ENCODE measurements at regions of chr17 and their contacts with region 1.

Region 1: DNA sequence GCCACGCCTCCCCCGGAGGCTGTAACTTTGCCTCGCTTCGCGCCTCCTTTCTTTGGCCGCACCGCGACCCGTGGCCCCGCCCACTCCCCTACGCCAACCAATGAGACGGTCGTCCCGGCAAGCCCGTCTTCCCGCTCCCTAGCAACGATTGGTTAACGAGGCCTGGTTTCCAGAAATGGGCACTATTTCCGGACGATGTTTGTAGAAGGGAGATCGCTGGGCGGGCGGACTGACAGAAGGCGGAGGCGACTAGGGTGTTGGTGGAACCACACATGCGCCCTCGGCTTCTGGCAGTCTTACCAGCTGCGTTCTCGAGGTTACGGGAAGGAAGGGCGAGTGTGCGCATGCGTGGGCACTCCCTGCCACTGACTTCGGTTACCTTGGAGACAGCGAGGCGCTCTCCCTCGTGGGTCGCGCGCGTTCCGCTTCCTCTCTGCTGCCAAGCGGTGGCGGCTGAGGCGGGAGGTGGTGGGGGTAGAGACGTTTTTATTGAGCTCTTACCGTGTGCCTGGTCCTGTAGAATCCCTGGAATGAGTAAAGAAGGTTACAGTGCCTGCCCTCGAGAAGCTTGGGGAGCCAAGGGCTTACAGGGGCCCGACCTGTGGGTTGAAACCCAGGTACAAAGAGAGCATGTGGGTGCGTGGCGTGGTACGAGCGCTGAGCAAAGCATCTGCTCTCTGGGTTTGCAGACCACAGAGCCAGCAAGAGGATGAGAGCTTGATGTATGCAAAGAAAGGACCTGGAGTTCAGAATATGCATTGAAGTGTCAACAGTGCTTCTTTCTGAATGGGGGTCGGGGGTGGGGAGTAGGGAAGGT is 500 bp upstream of the MAP3K14 start:
- DNase-seq: peak; percentile 97 to 100 (median 100)
- ATAC-seq: peak; percentile 92
- H3K4me3 ChIP-seq: peak overlapping the region; percentile 80
- H3K4me3 Mint-ChIP-seq: peak overlapping the region; percentile 81 to 97 (median 92)
- H3K27ac ChIP-seq: peak overlapping the region; percentile 93
- H3K27ac Mint-ChIP-seq: peak overlapping the region; percentile 90 to 98 (median 95)
- H3K4me1 ChIP-seq: peaks cover 47 to 57% of the 10 kb centered on the region in 2 donors
- H3K4me1 Mint-ChIP-seq: peaks cover 60 to 88% (median 82%) of the 10 kb centered on the region in 7 donors
- H3K27me3 ChIP-seq: no peaks in the 10 kb centered on the region
- H3K27me3 Mint-ChIP-seq: peaks cover 0 to 4% (median 0%) of the 10 kb centered on the region in 5 donors

Region 2: DNA sequence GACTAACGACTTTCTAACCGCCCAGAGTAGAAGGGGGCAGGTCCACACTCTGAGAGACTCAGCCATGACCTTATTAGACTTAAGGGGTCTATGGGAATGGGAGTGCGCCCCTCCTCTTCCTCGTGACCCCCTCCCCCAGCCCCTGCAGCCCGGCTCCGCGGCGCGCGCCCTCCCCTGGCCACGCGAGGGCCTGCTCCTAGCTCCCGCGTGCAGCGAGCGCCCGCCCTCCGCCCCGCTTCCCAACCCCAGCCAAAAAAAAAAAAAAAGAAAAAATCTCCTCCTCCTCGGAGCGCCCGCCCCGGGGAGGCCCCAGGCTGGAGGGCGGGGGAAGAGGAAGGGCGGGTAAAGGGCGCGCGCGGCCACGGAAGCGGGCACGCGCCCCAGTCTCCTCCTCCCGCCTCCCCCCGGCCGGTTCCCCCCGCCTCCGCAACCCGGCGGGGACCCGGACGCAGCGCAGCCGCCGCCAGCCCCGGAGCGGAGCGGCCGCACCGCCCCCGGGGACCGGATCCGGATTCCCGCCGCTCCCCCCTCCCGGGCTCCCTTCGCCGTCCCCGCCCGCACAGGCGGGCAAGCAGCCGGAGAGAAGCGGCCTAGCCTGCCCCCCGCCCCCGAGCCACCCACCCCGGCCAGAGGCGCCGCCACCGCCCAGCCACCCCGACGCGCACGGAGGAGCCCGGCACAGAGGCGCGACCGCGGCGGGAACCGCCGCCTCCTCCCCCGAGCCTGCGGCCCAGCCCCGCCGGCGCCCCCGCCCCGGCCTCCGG is 1098.8 kb before region 1 on chr17:
- CTCF ChIA-PET with region 1: no interaction called
- POLR2A ChIA-PET with region 1: no interaction called
- intact Hi-C with region 1: loop called in 1 of 2 experiments (anchors 10 kb)
- DNase-seq: peak; percentile 82 to 93 (median 92)
- ATAC-seq: peak; percentile 80
- H3K4me3 ChIP-seq: peak overlapping the region; percentile 68
- H3K4me3 Mint-ChIP-seq: peak overlapping the region; percentile 76 to 94 (median 86)
- H3K27ac ChIP-seq: peak overlapping the region; percentile 90
- H3K27ac Mint-ChIP-seq: peak overlapping the region; percentile 84 to 99 (median 97)
- H3K4me1 ChIP-seq: peaks cover 38 to 42% of the 10 kb centered on the region in 2 donors
- H3K4me1 Mint-ChIP-seq: peaks cover 48 to 53% (median 52%) of the 10 kb centered on the region in 7 donors
- H3K27me3 ChIP-seq: no peaks in the 10 kb centered on the region
- H3K27me3 Mint-ChIP-seq: no peaks in the 10 kb centered on the region

Region 3: DNA sequence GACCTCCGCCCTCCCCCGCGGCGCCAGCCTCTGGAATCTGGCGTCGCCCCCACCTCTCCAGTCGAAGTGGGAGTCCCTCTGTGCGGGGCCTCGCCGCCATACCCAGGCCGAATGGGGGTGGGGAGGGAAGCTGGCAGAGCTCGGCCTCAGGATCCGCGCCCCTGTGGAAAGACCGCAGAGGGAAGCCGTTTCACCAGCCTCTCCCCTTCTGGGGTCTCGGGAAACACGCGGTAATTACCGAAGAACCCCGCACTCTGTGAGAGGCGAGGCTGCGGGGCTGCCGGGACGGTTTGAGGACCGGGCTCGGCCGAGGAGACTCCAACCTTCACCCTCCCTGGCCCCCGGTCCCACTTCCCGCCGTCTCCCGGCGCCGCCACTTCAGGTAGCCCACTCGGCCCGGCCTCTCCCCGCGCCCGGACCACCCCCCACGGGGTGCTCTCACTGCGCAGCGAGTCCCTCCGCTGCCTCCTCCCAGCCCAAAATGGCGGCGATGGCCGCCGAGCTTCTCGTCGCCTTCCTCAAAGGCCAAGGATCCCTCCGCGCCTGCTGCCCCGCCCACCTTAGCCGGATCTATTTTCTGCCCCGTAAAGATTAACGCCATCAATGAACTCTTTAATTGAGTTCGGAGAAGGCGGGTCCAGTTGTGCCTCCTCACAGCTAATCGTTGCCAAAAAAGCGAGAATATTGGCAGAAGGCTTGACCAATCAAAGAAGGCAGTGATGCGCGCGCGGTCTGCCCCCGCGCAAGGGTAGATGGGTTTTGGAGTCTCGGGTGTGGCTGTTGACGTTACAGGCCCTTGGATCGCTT is 156.1 kb before region 1 on chr17:
- CTCF ChIA-PET with region 1: no interaction called
- POLR2A ChIA-PET with region 1: interaction called, 3 read pairs
- intact Hi-C with region 1: loop called (anchors 1 to 2 kb)
- DNase-seq: peak; percentile 89 to 100 (median 99)
- ATAC-seq: peak; percentile 93
- H3K4me3 ChIP-seq: peak overlapping the region; percentile 95
- H3K4me3 Mint-ChIP-seq: peak overlapping the region; percentile 88 to 100 (median 96)
- H3K27ac ChIP-seq: peak overlapping the region; percentile 98
- H3K27ac Mint-ChIP-seq: peak overlapping the region; percentile 97 to 100 (median 98)
- H3K4me1 ChIP-seq: peaks cover 15 to 27% of the 10 kb centered on the region in 2 donors
- H3K4me1 Mint-ChIP-seq: peaks cover 29 to 48% (median 43%) of the 10 kb centered on the region in 7 donors
- H3K27me3 ChIP-seq: no peaks in the 10 kb centered on the region
- H3K27me3 Mint-ChIP-seq: no peaks in the 10 kb centered on the region

Region 4: DNA sequence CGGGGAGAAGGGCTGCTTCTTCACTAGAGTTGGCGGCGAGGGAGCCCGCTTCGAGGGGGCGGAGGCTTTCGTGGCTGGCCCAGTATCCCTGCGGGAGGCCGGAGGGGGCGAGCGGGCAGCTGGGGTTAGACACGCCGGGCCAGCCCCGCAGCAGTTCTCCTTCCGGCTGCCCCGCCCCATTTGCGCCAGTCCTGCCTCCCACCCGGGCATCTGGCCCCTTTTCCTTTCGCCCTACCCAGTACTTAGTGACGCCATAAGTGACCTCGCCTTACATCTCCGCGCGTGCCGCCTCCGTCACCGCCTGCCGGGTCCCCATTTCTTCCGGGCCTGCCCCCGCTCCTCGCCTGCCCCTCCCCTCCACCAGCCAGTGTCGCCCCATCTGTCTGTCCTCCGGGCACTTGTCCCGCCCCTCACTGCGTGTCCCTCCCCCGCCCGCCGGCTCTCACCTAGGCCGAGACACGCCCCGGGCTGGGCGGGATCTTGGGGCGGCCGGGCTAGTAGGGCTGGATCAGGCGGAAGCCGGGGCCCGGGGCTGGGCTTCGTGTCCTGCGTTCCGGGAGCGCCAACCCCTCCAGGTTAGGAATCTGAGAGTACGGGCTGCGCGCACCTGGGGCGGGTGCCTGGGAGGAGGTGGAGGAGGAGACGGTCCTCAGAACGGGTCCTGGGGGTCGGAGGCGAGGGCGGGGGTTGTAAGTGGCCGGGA is 69.7 kb before region 1 on chr17:
- CTCF ChIA-PET with region 1: interaction called, 12 read pairs
- POLR2A ChIA-PET with region 1: interaction called, 44 read pairs
- intact Hi-C with region 1: loop called (anchors 1 kb)
- DNase-seq: peak; percentile 83 to 96 (median 87)
- ATAC-seq: peak; percentile 88
- H3K4me3 ChIP-seq: peak overlapping the region; percentile 89
- H3K4me3 Mint-ChIP-seq: peak overlapping the region; percentile 88 to 93 (median 90)
- H3K27ac ChIP-seq: peak overlapping the region; percentile 95
- H3K27ac Mint-ChIP-seq: peak overlapping the region; percentile 89 to 98 (median 96)
- H3K4me1 ChIP-seq: peaks cover 26 to 42% of the 10 kb centered on the region in 2 donors
- H3K4me1 Mint-ChIP-seq: peaks cover 30 to 68% (median 61%) of the 10 kb centered on the region in 7 donors
- H3K27me3 ChIP-seq: no peaks in the 10 kb centered on the region
- H3K27me3 Mint-ChIP-seq: no peaks in the 10 kb centered on the region

Region 5: GRCh38 chr17:45371414-45372327 is 54.4 kb after region 1 on chr17:
- CTCF ChIA-PET with region 1: interaction called, 3 read pairs
- POLR2A ChIA-PET with region 1: interaction called, 6 read pairs
- intact Hi-C with region 1: loop called in 1 of 2 experiments (anchors 1 kb)
- DNase-seq: peak in 1 of 9 donors; percentile 67
- ATAC-seq: peak; percentile 69
- H3K4me3 ChIP-seq: no peak overlapping the region
- H3K4me3 Mint-ChIP-seq: peak overlapping the region; percentile 33 to 88 (median 76)
- H3K27ac ChIP-seq: no peak overlapping the region
- H3K27ac Mint-ChIP-seq: peak overlapping the region in 1 of 9 donors; percentile 2
- H3K4me1 ChIP-seq: no peaks in the 10 kb centered on the region
- H3K4me1 Mint-ChIP-seq: peaks cover 12 to 18% (median 16%) of the 10 kb centered on the region in 7 donors
- H3K27me3 ChIP-seq: no peaks in the 10 kb centered on the region
- H3K27me3 Mint-ChIP-seq: peaks cover 11 to 31% (median 19%) of the 10 kb centered on the region in 5 donors

Region 6: GRCh38 chr17:45782889-45783592 is 465.7 kb after region 1 on chr17:
- CTCF ChIA-PET with region 1: no interaction called
- POLR2A ChIA-PET with region 1: no interaction called
- intact Hi-C with region 1: no loop called
- DNase-seq: peak in 3 of 9 donors; percentile 12 to 55 (median 18)
- ATAC-seq: peak; percentile 51
- H3K4me3 ChIP-seq: no peak overlapping the region
- H3K4me3 Mint-ChIP-seq: peak overlapping the region; percentile 59 to 83 (median 74)
- H3K27ac ChIP-seq: no peak overlapping the region
- H3K27ac Mint-ChIP-seq: peak overlapping the region in 1 of 9 donors; percentile 59
- H3K4me1 ChIP-seq: no peaks in the 10 kb centered on the region
- H3K4me1 Mint-ChIP-seq: peaks cover 0 to 9% (median 4%) of the 10 kb centered on the region in 7 donors
- H3K27me3 ChIP-seq: peaks cover 5 to 12% of the 10 kb centered on the region in 2 donors
- H3K27me3 Mint-ChIP-seq: peaks cover 58 to 76% (median 70%) of the 10 kb centered on the region in 5 donors

Region 7: DNA sequence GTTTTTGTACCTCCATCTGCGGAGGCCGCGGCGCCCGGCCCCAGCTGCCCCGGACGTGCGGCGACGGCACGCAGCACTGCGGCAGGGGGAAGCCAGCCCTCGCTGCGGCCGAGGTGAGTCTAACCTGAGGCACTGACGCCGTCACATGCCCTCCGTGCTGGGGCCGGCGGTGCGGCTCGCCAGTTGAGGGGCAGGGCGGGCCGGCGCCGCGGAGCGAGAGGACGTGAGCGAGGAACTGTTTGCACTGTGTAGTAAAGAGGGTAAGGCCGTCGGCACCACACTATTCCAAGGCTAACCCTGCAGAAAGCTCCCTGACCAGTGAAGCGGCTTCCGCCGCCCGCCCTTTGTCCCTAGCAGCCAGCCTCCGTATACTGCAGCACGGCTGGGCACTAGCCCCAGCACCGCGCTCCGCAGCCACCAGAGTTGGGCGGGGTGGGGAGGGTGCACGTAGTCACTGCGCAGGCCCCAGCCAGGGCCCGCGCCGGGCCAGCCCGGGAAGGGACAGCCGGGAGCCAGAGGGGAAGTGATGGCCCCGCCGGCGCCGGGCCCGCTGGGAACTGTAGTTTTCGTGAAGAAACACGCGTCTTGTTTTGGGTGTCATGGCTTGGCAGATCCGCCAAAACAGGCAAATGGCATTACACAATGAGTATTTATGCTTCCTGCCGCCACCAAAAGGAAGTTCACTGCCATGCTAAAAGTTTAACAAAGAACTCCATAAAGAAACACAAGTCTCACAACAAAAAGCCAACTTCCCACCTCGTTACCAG is 876.5 kb after region 1 on chr17:
- CTCF ChIA-PET with region 1: no interaction called
- POLR2A ChIA-PET with region 1: no interaction called
- intact Hi-C with region 1: loop called (anchors 5 to 10 kb)
- DNase-seq: peak; percentile 85 to 95 (median 92)
- ATAC-seq: peak; percentile 80
- H3K4me3 ChIP-seq: peak overlapping the region; percentile 84
- H3K4me3 Mint-ChIP-seq: peak overlapping the region; percentile 75 to 98 (median 84)
- H3K27ac ChIP-seq: peak overlapping the region; percentile 93
- H3K27ac Mint-ChIP-seq: peak overlapping the region; percentile 87 to 100 (median 97)
- H3K4me1 ChIP-seq: peaks cover 47 to 51% of the 10 kb centered on the region in 2 donors
- H3K4me1 Mint-ChIP-seq: peaks cover 44 to 67% (median 61%) of the 10 kb centered on the region in 7 donors
- H3K27me3 ChIP-seq: no peaks in the 10 kb centered on the region
- H3K27me3 Mint-ChIP-seq: no peaks in the 10 kb centered on the region

Measured in naive thymus-derived CD4-positive, alpha-beta T cell (primary cell).